ENCODE measurements at regions of chr16 and their contacts with region 1.

Region 1: DNA sequence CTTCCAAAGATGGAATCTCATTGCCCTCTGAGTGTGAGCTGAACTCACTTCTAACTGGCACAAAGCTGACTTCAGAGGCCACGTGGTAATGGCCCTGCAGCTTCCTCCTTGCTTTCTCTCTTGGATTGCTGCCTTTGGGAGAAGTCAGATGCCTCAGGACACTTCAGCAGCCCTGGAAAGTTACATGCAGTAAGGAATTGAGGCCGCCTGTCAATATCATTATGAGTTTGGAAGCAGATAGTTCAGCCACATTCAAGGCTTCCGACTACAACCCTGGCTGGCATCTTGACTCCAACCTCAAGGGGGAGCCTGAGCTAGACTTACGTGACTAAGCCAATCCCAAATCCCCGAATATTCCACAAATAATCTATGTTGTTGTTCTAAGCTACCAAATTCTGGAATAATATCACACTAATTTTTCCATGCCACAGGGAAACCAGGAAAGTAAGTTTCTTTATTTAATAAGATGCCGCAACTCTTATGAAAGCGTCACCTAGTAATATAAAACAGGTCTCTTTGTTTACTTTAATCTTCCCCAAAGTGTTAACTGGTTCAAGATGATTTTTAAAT is 13.6 kb downstream of the CEP20 start:
- DNase-seq: peak; percentile 32 to 65
- ATAC-seq: peak; percentile 78 to 85 (median 81)
- H3K4me3 ChIP-seq: no peak overlapping the region
- H3K27ac ChIP-seq: peak overlapping the region; percentile 58
- H3K4me1 ChIP-seq: peaks cover 26% of the 10 kb centered on the region
- H3K27me3 ChIP-seq: no peaks in the 10 kb centered on the region
- CTCF ChIP-seq: peak; percentile 68

Region 2: GRCh38 chr16:15811481-15812400 is 63.1 kb before region 1 on chr16:
- intact Hi-C with region 1: no loop called
- DNase-seq: no peak
- ATAC-seq: peak; percentile 81 to 93 (median 88)
- H3K4me3 ChIP-seq: peak overlapping the region; percentile 34
- H3K27ac ChIP-seq: peak overlapping the region; percentile 71
- H3K4me1 ChIP-seq: peaks cover 7% of the 10 kb centered on the region
- H3K27me3 ChIP-seq: no peaks in the 10 kb centered on the region
- CTCF ChIP-seq: no peak

Region 3: GRCh38 chr16:16062023-16062932 is 187.4 kb after region 1 on chr16:
- intact Hi-C with region 1: loop called in 1 of 2 experiments (anchors 5 kb)
- DNase-seq: no peak
- ATAC-seq: peak in 1 of 4 donors; percentile 9
- H3K4me3 ChIP-seq: no peak overlapping the region
- H3K27ac ChIP-seq: peak overlapping the region; percentile 80
- H3K4me1 ChIP-seq: peaks cover 31% of the 10 kb centered on the region
- H3K27me3 ChIP-seq: no peaks in the 10 kb centered on the region
- CTCF ChIP-seq: no peak

Region 4: GRCh38 chr16:16075488-16076422 is 200.9 kb after region 1 on chr16:
- intact Hi-C with region 1: loop called in 1 of 2 experiments (anchors 5 kb)
- DNase-seq: peak; percentile 66 to 84
- ATAC-seq: peak; percentile 74 to 82 (median 74)
- H3K4me3 ChIP-seq: no peak overlapping the region
- H3K27ac ChIP-seq: peak overlapping the region; percentile 80
- H3K4me1 ChIP-seq: peaks cover 46% of the 10 kb centered on the region
- H3K27me3 ChIP-seq: no peaks in the 10 kb centered on the region
- CTCF ChIP-seq: no peak

Region 5: GRCh38 chr16:16127469-16128116 is 252.8 kb after region 1 on chr16:
- intact Hi-C with region 1: loop called (anchors 1 to 5 kb)
- DNase-seq: peak; percentile 59 to 75
- ATAC-seq: peak; percentile 86 to 91 (median 88)
- H3K4me3 ChIP-seq: no peak overlapping the region
- H3K27ac ChIP-seq: no peak overlapping the region
- H3K4me1 ChIP-seq: no peaks in the 10 kb centered on the region
- H3K27me3 ChIP-seq: no peaks in the 10 kb centered on the region
- CTCF ChIP-seq: peak; percentile 87